ENCODE measurements at regions of chr6 and their contacts with region 1.

Region 1: GRCh38 chr6:156776840-156777576 is at the start of gene ARID1B:
- DNase-seq: peak; percentile 93
- ATAC-seq: peak; percentile 65
- H3K4me3 ChIP-seq: peak within 1 kb of the TSS; percentile 70 to 92 (median 81)
- H3K4me3 Mint-ChIP-seq: peak within 1 kb of the TSS; percentile 94
- H3K27ac ChIP-seq: peak within 1 kb of the TSS; percentile 92 to 94
- H3K27ac Mint-ChIP-seq: peak within 1 kb of the TSS; percentile 98
- H3K4me1 ChIP-seq: peaks cover 12 to 26% of the 10 kb centered on the region in 2 donors
- H3K4me1 Mint-ChIP-seq: peaks cover 42% of the 10 kb centered on the region
- H3K27me3 ChIP-seq: no peaks in the 10 kb centered on the region
- H3K27me3 Mint-ChIP-seq: no peaks in the 10 kb centered on the region
- CTCF ChIP-seq: no peak
- total RNA-seq, gene ARID1B: 280 and 297 TPM in 2 replicates

Region 2: DNA sequence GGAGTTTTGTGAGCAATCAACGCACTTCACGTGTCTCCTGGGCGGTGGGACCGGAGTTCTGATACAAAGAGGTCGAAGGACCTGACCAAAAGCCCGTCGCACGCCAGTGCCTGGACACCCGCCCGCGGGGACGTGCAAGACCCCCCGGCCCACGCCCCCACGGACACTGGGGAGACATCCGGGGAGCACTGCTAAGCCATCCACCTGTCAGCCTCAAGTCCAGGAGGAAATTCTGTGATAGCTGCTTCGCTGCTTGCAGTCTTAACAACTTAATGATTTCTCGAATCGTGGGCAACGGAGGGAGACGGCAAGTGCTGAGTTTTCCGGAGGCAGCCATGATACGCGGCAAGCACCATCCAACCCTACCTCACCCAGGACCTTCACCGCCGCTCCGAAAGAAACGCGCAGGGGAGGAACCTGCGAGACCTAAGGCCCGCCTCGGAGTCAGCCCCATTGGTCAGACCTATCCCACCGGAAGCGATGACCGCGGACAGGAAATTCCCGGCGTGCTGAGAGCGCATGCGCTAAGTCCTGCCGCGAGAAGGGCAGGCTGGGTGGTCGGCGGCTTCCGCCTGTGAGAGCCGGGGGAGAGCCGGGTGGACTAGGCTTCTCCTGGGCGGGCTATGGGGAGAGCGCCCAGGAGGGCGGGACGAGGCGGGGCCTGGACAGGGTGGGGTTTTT is 1462.8 kb before region 1 on chr6 and contains the start of gene TFB1M:
- CTCF ChIA-PET with region 1: no interaction called
- POLR2A ChIA-PET with region 1: no interaction called
- intact Hi-C with region 1: loop called (anchors 1 kb)
- DNase-seq: peak; percentile 98
- ATAC-seq: peak; percentile 93
- H3K4me3 ChIP-seq: peak within 1 kb of the TSS; percentile 68 to 92 (median 92)
- H3K4me3 Mint-ChIP-seq: peak within 1 kb of the TSS; percentile 100
- H3K27ac ChIP-seq: peak within 1 kb of the TSS; percentile 79 to 84
- H3K27ac Mint-ChIP-seq: peak within 1 kb of the TSS; percentile 97
- H3K4me1 ChIP-seq: peaks cover 4% of the 10 kb centered on the region in 2 donors
- H3K4me1 Mint-ChIP-seq: peaks cover 37% of the 10 kb centered on the region
- H3K27me3 ChIP-seq: no peaks in the 10 kb centered on the region
- H3K27me3 Mint-ChIP-seq: no peaks in the 10 kb centered on the region
- CTCF ChIP-seq: no peak
- total RNA-seq, gene TFB1M: 49.9 and 58.0 TPM in 2 replicates

Region 3: DNA sequence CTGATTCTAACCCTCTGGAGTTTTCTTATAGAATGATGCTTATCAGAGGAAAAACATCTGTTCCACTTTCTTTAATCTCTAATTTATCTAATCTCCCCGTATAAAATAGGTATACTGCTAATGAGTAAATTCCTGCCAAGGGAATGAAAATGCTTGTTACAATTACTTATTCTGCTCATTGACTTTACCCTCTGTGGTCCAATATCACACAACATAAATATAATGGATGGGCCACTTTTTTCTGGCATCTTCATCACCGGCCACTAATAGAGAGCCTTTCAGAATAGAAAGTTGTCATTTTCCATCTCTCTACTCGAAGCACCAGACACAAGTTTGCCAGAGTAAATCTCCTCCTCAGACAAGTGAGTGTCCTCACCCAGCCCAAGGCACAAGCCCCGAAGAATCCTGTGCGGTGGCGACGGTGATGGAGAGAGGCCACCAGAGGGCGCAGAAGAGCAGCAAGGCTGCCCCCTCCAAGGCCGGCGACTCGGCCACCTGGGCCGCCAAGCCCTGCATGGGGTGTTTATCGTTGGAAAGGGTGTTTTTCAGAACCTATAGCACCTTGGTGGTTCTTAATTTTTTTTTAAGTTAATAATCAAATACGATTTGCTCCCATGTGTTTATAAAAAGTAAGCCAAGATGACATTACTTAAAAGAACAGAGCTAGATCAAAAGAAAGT is 212.7 kb before region 1 on chr6:
- CTCF ChIA-PET with region 1: interaction called, 4 read pairs
- POLR2A ChIA-PET with region 1: interaction called, 3 read pairs
- intact Hi-C with region 1: loop called (anchors 1 kb)
- DNase-seq: peak; percentile 86
- ATAC-seq: peak; percentile 100
- H3K4me3 ChIP-seq: no peak overlapping the region
- H3K4me3 Mint-ChIP-seq: no peak overlapping the region
- H3K27ac ChIP-seq: no peak overlapping the region
- H3K27ac Mint-ChIP-seq: no peak overlapping the region
- H3K4me1 ChIP-seq: peaks cover 2 to 12% of the 10 kb centered on the region in 2 donors
- H3K4me1 Mint-ChIP-seq: peaks cover 16% of the 10 kb centered on the region
- H3K27me3 ChIP-seq: no peaks in the 10 kb centered on the region
- H3K27me3 Mint-ChIP-seq: peaks cover 18% of the 10 kb centered on the region
- CTCF ChIP-seq: peak; percentile 98

Region 4: GRCh38 chr6:156686995-156687788 is 89.8 kb before region 1 on chr6:
- CTCF ChIA-PET with region 1: interaction called, 22 read pairs
- POLR2A ChIA-PET with region 1: interaction called, 20 read pairs
- intact Hi-C with region 1: loop called (anchors 1 kb)
- DNase-seq: peak; percentile 91
- ATAC-seq: peak; percentile 83
- H3K4me3 ChIP-seq: peak overlapping the region; percentile 80 to 99 (median 84)
- H3K4me3 Mint-ChIP-seq: peak overlapping the region; percentile 88
- H3K27ac ChIP-seq: peak overlapping the region; percentile 92 to 94
- H3K27ac Mint-ChIP-seq: peak overlapping the region; percentile 98
- H3K4me1 ChIP-seq: peaks cover 50% of the 10 kb centered on the region in 2 donors
- H3K4me1 Mint-ChIP-seq: peaks cover 59% of the 10 kb centered on the region
- H3K27me3 ChIP-seq: no peaks in the 10 kb centered on the region
- H3K27me3 Mint-ChIP-seq: no peaks in the 10 kb centered on the region
- CTCF ChIP-seq: no peak

Region 5: DNA sequence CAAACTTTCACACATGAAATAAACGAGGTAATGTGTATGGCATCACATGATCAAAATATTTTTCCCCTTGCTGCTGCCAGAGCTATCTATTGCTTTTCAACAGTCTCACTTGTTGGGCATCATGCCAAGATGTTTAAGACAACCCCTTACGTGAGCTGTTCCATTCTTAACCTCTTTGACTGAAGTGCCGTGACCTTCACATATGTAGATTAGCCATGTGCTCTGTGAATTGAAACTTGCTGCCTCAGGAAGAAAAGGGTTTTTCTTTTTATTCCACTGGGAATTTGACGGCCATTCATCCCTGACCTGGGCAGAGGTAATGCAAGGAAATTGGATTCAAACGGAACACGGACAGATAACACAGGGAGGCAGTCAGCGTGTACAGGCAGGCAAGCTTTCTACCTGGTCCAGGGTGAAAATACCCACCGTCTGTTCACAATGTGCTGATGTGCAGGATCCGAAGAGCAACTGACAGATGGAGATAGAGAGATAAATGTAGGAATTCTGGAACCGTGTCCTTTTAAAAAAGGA is 14.4 kb after region 1 on chr6:
- CTCF ChIA-PET with region 1: interaction called, 5 read pairs
- POLR2A ChIA-PET with region 1: interaction called, 4 read pairs
- intact Hi-C with region 1: loop called (anchors 1 kb)
- DNase-seq: peak; percentile 83
- ATAC-seq: peak; percentile 84
- H3K4me3 ChIP-seq: no peak overlapping the region
- H3K4me3 Mint-ChIP-seq: peak overlapping the region; percentile 63
- H3K27ac ChIP-seq: peak overlapping the region in 1 of 2 donors; percentile 44
- H3K27ac Mint-ChIP-seq: peak overlapping the region; percentile 60
- H3K4me1 ChIP-seq: peaks cover 77 to 88% of the 10 kb centered on the region in 2 donors
- H3K4me1 Mint-ChIP-seq: peaks cover 95% of the 10 kb centered on the region
- H3K27me3 ChIP-seq: no peaks in the 10 kb centered on the region
- H3K27me3 Mint-ChIP-seq: no peaks in the 10 kb centered on the region
- CTCF ChIP-seq: no peak

Region 6: GRCh38 chr6:156897947-156898531 is 121.0 kb after region 1 on chr6:
- CTCF ChIA-PET with region 1: no interaction called
- POLR2A ChIA-PET with region 1: no interaction called
- intact Hi-C with region 1: no loop called
- DNase-seq: no peak
- ATAC-seq: no peak
- H3K4me3 ChIP-seq: no peak overlapping the region
- H3K4me3 Mint-ChIP-seq: no peak overlapping the region
- H3K27ac ChIP-seq: no peak overlapping the region
- H3K27ac Mint-ChIP-seq: no peak overlapping the region
- H3K4me1 ChIP-seq: peaks cover 4 to 8% of the 10 kb centered on the region in 2 donors
- H3K4me1 Mint-ChIP-seq: peaks cover 56% of the 10 kb centered on the region
- H3K27me3 ChIP-seq: no peaks in the 10 kb centered on the region
- H3K27me3 Mint-ChIP-seq: no peaks in the 10 kb centered on the region
- CTCF ChIP-seq: no peak

Region 7: GRCh38 chr6:156917213-156917612 is 140.2 kb after region 1 on chr6:
- CTCF ChIA-PET with region 1: no interaction called
- POLR2A ChIA-PET with region 1: no interaction called
- intact Hi-C with region 1: loop called (anchors 10 kb)
- DNase-seq: peak; percentile 23
- ATAC-seq: no peak
- H3K4me3 ChIP-seq: no peak overlapping the region
- H3K4me3 Mint-ChIP-seq: peak overlapping the region; percentile 62
- H3K27ac ChIP-seq: peak overlapping the region; percentile 85 to 88
- H3K27ac Mint-ChIP-seq: peak overlapping the region; percentile 76
- H3K4me1 ChIP-seq: peaks cover 38 to 45% of the 10 kb centered on the region in 2 donors
- H3K4me1 Mint-ChIP-seq: peaks cover 67% of the 10 kb centered on the region
- H3K27me3 ChIP-seq: no peaks in the 10 kb centered on the region
- H3K27me3 Mint-ChIP-seq: no peaks in the 10 kb centered on the region
- CTCF ChIP-seq: no peak

Region 8: GRCh38 chr6:157021344-157021992 is 244.5 kb after region 1 on chr6:
- CTCF ChIA-PET with region 1: interaction called, 8 read pairs
- POLR2A ChIA-PET with region 1: interaction called, 7 read pairs
- intact Hi-C with region 1: loop called (anchors 1 kb)
- DNase-seq: peak; percentile 93
- ATAC-seq: peak; percentile 80
- H3K4me3 ChIP-seq: peak overlapping the region; percentile 84 to 97 (median 87)
- H3K4me3 Mint-ChIP-seq: peak overlapping the region; percentile 94
- H3K27ac ChIP-seq: peak overlapping the region; percentile 98 to 100
- H3K27ac Mint-ChIP-seq: peak overlapping the region; percentile 99
- H3K4me1 ChIP-seq: peaks cover 33 to 40% of the 10 kb centered on the region in 2 donors
- H3K4me1 Mint-ChIP-seq: peaks cover 63% of the 10 kb centered on the region
- H3K27me3 ChIP-seq: no peaks in the 10 kb centered on the region
- H3K27me3 Mint-ChIP-seq: no peaks in the 10 kb centered on the region
- CTCF ChIP-seq: peak; percentile 50

Measured in B cell (primary cell).